GM12878 (cell line): ENCODE measurements at regions of chr1 and their contacts with region 1.

Region 1: DNA sequence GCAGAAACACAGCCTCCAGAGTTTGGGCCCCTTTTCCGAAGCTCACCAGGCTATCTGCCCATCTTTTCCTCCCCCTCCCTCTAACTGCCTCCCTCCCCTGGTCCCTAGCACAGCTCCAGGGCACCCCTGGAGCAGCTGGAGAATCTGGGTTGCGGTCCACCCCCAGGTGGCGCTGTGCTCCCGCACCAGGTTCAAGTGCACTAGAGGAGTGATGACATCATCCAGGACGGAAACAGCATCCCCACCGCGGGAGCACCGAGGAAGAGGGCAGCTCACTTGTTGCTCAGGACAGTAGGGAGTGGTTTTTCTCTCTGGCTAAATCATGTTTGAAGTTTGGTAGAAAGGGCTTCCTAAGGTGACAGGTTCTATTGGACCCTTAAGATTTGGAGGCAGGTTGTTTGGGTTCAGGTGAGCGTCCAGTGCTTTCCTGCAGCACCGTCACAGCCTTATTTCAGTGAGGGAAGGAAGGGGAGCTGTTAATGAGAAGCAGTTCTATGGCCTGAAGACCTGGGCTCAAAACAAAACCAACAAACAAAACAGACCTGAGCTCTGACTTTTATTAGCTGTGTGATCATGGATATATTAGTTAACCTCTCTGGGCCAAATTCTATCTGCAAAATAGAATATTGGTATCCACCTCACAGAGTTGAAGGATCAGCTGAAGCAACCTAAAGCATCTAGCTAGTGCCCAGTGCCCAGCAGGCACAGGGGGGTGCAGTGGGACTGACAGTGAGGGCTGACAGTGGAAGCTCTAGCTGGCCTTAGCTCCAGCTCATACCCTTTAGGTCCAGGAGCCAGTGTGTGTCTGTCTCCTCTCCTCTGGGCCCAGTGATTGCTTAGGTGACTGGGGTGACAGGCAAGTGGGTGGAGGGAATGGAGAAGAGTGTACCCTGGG is 7.5 kb downstream of the SHISA4 start:
- DNase-seq: peak; percentile 40
- ATAC-seq: peak; percentile 98
- H3K4me3 ChIP-seq: no peak overlapping the region
- H3K27ac ChIP-seq: no peak overlapping the region
- H3K4me1 ChIP-seq: no peaks in the 10 kb centered on the region
- H3K27me3 ChIP-seq: no peaks in the 10 kb centered on the region
- CTCF ChIP-seq: peak; percentile 92 to 95 (median 93)
- EP300 ChIP-seq: no peak
- POLR2A ChIP-seq: no peak
- RAD21 ChIP-seq: peak; percentile 87

Region 2: DNA sequence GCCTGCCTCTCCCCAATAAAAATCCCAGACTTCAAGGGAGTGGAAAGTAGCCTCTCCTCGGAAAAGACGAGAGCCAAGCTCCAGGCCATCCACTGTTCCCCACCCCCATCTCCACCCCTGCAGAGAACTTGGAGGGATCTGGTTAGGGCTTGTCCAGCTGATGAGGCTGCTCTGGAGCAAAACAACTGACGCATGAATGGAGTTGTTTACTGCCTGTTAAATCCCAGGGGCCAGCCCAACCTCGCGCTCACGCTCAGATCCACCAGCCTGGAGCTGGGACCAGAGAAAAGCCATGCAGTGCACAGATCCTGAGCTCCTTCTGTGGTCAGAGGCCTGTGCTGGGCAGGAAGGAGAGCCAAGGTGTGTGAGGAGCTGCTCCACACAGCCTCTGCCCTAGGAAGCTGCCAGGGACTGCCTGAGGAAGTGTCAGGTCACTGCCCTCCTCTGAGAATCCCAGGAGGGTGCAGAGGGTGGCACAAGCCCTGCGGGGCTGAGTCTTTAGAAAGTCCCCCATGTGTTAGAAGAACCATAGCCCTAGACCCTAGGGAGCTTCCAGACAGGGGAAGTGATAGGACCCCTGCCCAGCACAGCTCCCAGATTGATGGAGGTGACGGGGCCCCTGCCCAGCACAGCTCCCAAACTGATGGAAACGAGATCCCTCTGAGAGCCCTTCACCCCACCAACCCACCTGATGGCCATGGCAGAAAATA is 176.2 kb before region 1 on chr1:
- CTCF ChIA-PET with region 1: no interaction called
- POLR2A ChIA-PET with region 1: no interaction called
- RAD21 ChIA-PET with region 1: no interaction called
- SMC1A ChIA-PET with region 1: no interaction called
- in situ Hi-C with region 1: no loop called
- intact Hi-C with region 1: no loop called
- DNase-seq: no peak
- ATAC-seq: no peak
- H3K4me3 ChIP-seq: no peak overlapping the region
- H3K27ac ChIP-seq: no peak overlapping the region
- H3K4me1 ChIP-seq: peaks cover 40% of the 10 kb centered on the region
- H3K27me3 ChIP-seq: no peaks in the 10 kb centered on the region
- CTCF ChIP-seq: no peak
- EP300 ChIP-seq: no peak
- POLR2A ChIP-seq: no peak
- RAD21 ChIP-seq: no peak

Region 3: GRCh38 chr1:201769966-201770365 is 126.2 kb before region 1 on chr1:
- CTCF ChIA-PET with region 1: no interaction called
- POLR2A ChIA-PET with region 1: no interaction called
- RAD21 ChIA-PET with region 1: no interaction called
- SMC1A ChIA-PET with region 1: no interaction called
- in situ Hi-C with region 1: no loop called
- intact Hi-C with region 1: no loop called
- DNase-seq: no peak
- ATAC-seq: no peak
- H3K4me3 ChIP-seq: no peak overlapping the region
- H3K27ac ChIP-seq: no peak overlapping the region
- H3K4me1 ChIP-seq: no peaks in the 10 kb centered on the region
- H3K27me3 ChIP-seq: 0 out of 4 replicates have a peak, but pooled peaks cover 0 to 2% of the 10 kb centered on the region in 2 experiments
- CTCF ChIP-seq: no peak
- EP300 ChIP-seq: no peak
- POLR2A ChIP-seq: no peak
- RAD21 ChIP-seq: no peak

Region 4: GRCh38 chr1:201828820-201829774 is 67.1 kb before region 1 on chr1 and contains the start of gene IPO9:
- CTCF ChIA-PET with region 1: interaction called, 13 read pairs
- POLR2A ChIA-PET with region 1: interaction called, 4 read pairs
- RAD21 ChIA-PET with region 1: no interaction called
- SMC1A ChIA-PET with region 1: no interaction called
- in situ Hi-C with region 1: no loop called
- intact Hi-C with region 1: no loop called
- DNase-seq: peak; percentile 76
- ATAC-seq: peak; percentile 93
- H3K4me3 ChIP-seq: peak within 1 kb of the TSS; percentile 99
- H3K27ac ChIP-seq: peak within 1 kb of the TSS; percentile 97
- H3K4me1 ChIP-seq: peaks cover 2% of the 10 kb centered on the region; the same call in 1 of the 2 replicates
- H3K27me3 ChIP-seq: no peaks in the 10 kb centered on the region
- CTCF ChIP-seq: peak; percentile 94 to 98 (median 95)
- EP300 ChIP-seq: no peak
- POLR2A ChIP-seq: peak; percentile 93
- RAD21 ChIP-seq: no peak
- polyA plus RNA-seq, gene IPO9: 19.1 to 32.9 TPM

Region 5: DNA sequence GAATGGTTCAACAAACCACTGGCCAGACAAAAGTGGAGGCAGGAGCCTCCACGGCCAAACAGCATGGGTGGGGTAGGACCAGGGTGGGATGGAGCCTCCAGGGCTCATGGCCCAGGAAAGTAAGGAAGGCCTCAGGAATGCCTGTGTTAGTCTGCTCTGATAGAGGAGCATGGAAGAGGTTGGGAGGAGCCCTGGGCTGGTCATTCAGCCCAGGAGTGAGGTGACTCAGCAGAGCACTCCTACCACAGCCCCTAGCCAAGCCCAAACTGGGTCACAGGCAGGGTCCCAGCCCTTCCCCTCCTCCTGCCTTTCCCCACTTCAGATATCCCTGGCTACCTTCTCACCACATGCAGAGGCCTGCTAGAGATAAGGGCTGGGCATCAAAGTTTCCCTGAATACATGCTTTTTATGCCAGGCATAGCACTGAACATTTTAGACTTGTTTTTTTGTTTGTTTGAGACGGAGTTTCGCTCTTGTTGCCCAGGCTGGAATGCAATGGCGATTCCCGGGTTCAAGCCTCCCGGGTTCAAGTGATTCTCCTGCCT is 10.6 kb before region 1 on chr1:
- CTCF ChIA-PET with region 1: interaction called, 99 read pairs
- POLR2A ChIA-PET with region 1: no interaction called
- RAD21 ChIA-PET with region 1: interaction called, 5 read pairs
- SMC1A ChIA-PET with region 1: interaction called, 9 read pairs
- in situ Hi-C with region 1: no loop called
- intact Hi-C with region 1: no loop called
- DNase-seq: no peak
- ATAC-seq: no peak
- H3K4me3 ChIP-seq: no peak overlapping the region
- H3K27ac ChIP-seq: no peak overlapping the region
- H3K4me1 ChIP-seq: peaks cover 5% of the 10 kb centered on the region; the same call in 1 of the 2 replicates
- H3K27me3 ChIP-seq: peaks cover 2 to 11% of the 10 kb centered on the region in 2 experiments; a peak in 3 of 4 replicates
- CTCF ChIP-seq: no peak
- EP300 ChIP-seq: no peak
- POLR2A ChIP-seq: no peak
- RAD21 ChIP-seq: no peak

Region 6: DNA sequence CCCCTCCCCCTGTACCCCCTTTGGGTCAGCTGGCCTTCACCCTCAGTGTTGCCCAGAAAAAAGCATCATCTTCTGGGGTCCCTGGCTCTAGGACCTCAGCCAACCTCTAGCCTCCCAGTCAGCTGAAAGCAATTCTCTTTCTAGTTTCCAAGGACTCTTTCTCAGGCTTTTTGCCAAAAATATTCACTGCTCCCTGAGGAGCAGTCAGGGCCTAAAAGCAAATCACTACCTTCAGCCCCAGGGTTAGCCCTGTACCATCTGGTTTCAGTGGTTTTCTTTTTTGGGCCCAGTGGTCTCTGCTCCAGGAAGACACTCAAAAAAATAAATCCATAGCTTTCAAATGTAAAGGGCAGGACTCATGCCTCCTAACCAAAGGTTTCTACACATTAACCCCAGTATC is 53.3 kb after region 1 on chr1:
- CTCF ChIA-PET with region 1: interaction called, 11 read pairs
- POLR2A ChIA-PET with region 1: no interaction called
- RAD21 ChIA-PET with region 1: no interaction called
- SMC1A ChIA-PET with region 1: interaction called, 5 read pairs
- in situ Hi-C with region 1: no loop called
- intact Hi-C with region 1: no loop called
- DNase-seq: no peak
- ATAC-seq: no peak
- H3K4me3 ChIP-seq: no peak overlapping the region
- H3K27ac ChIP-seq: no peak overlapping the region
- H3K4me1 ChIP-seq: no peaks in the 10 kb centered on the region
- H3K27me3 ChIP-seq: peaks cover 8 to 17% of the 10 kb centered on the region in 2 experiments
- CTCF ChIP-seq: no peak
- EP300 ChIP-seq: no peak
- POLR2A ChIP-seq: no peak
- RAD21 ChIP-seq: no peak

Region 7: GRCh38 chr1:201982623-201983379 is 86.6 kb after region 1 on chr1 and contains the start of gene RNPEP:
- CTCF ChIA-PET with region 1: interaction called, 14 read pairs
- POLR2A ChIA-PET with region 1: no interaction called
- RAD21 ChIA-PET with region 1: interaction called, 7 read pairs
- SMC1A ChIA-PET with region 1: interaction called, 4 read pairs
- in situ Hi-C with region 1: no loop called
- intact Hi-C with region 1: no loop called
- DNase-seq: no peak
- ATAC-seq: peak; percentile 88
- H3K4me3 ChIP-seq: peak within 1 kb of the TSS; percentile 82
- H3K27ac ChIP-seq: peak within 1 kb of the TSS; percentile 78
- H3K4me1 ChIP-seq: peaks cover 3% of the 10 kb centered on the region
- H3K27me3 ChIP-seq: 0 out of 4 replicates have a peak, but pooled peaks cover 0 to 2% of the 10 kb centered on the region in 2 experiments
- CTCF ChIP-seq: peak in 2 of 3 experiments; percentile 5 to 13; a peak in 2 of 6 replicates
- EP300 ChIP-seq: no peak
- POLR2A ChIP-seq: peak; percentile 80
- RAD21 ChIP-seq: no peak
- polyA plus RNA-seq, gene RNPEP: 18.3 to 21.6 TPM

Region 8: GRCh38 chr1:202135221-202135721 is 239.1 kb after region 1 on chr1:
- CTCF ChIA-PET with region 1: interaction called, 20 read pairs
- POLR2A ChIA-PET with region 1: no interaction called
- RAD21 ChIA-PET with region 1: interaction called, 4 read pairs
- SMC1A ChIA-PET with region 1: interaction called, 3 read pairs
- in situ Hi-C with region 1: no loop called
- intact Hi-C with region 1: no loop called
- DNase-seq: no peak
- ATAC-seq: peak; percentile 97
- H3K4me3 ChIP-seq: no peak overlapping the region
- H3K27ac ChIP-seq: no peak overlapping the region
- H3K4me1 ChIP-seq: no peaks in the 10 kb centered on the region
- H3K27me3 ChIP-seq: no peaks in the 10 kb centered on the region
- CTCF ChIP-seq: peak; percentile 77 to 86 (median 84)
- EP300 ChIP-seq: no peak
- POLR2A ChIP-seq: no peak; the same call in 1 of the 2 replicates
- RAD21 ChIP-seq: peak; percentile 72